Activated T-helper 1 cell treated with anti-CD3 and anti-CD28 coated beads, Interleukin-12 subunit alpha, Interleukin-12 subunit beta, Interleukin-2, Interleukin-4 antibody, amounts not matched to agents 30 ng/mL and 10 ng/mL and 1 ng/mL, durations not matched to agents 14 hours and 24 hours and 36 hours (primary cell): ENCODE measurements at regions of chr1 and their contacts with region 1.

Region 1: GRCh38 chr1:167517535-167518330 is 596 bp downstream of the CD247 start:
- DNase-seq: peak; percentile 76
- H3K4me3 Mint-ChIP-seq: peak overlapping the region; percentile 97
- H3K27ac Mint-ChIP-seq: peak overlapping the region; percentile 98
- H3K4me1 Mint-ChIP-seq: peaks cover 59% of the 10 kb centered on the region
- H3K27me3 Mint-ChIP-seq: peaks cover 7% of the 10 kb centered on the region

Region 2: DNA sequence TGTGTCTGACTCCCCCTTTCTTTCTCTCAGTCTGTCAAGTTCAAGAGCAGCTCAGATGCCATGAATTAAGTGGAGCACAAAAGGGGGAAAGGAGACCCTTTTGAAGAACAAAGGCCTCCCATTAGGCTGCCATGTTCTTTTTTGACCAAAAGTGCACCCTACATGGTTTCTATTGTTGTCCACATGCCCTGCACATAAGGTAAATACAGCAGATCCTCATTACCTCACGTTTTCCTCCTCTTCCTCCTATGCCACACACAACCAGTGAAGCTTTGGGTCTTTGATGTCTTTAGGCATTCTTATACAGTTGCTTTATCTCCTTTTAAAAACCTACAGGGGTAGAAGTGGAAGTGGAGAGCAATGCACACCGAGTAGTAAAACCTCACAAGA is 249.3 kb before region 1 on chr1:
- intact Hi-C with region 1: loop called (anchors 1 kb)
- DNase-seq: no peak
- H3K4me3 Mint-ChIP-seq: no peak overlapping the region
- H3K27ac Mint-ChIP-seq: no peak overlapping the region
- H3K4me1 Mint-ChIP-seq: peaks cover 20% of the 10 kb centered on the region
- H3K27me3 Mint-ChIP-seq: no peaks in the 10 kb centered on the region

Region 3: GRCh38 chr1:167455786-167456446 is 61.8 kb before region 1 on chr1:
- intact Hi-C with region 1: loop called (anchors 1 kb)
- DNase-seq: peak; percentile 36
- H3K4me3 Mint-ChIP-seq: peak overlapping the region; percentile 81
- H3K27ac Mint-ChIP-seq: peak overlapping the region; percentile 86
- H3K4me1 Mint-ChIP-seq: peaks cover 56% of the 10 kb centered on the region
- H3K27me3 Mint-ChIP-seq: no peaks in the 10 kb centered on the region

Region 4: GRCh38 chr1:167491586-167492461 is 25.9 kb before region 1 on chr1:
- intact Hi-C with region 1: loop called (anchors 1 kb)
- DNase-seq: no peak
- H3K4me3 Mint-ChIP-seq: peak overlapping the region; percentile 70
- H3K27ac Mint-ChIP-seq: peak overlapping the region; percentile 88
- H3K4me1 Mint-ChIP-seq: peaks cover 92% of the 10 kb centered on the region
- H3K27me3 Mint-ChIP-seq: no peaks in the 10 kb centered on the region

Region 5: GRCh38 chr1:167533851-167534300 is 16.1 kb after region 1 on chr1:
- intact Hi-C with region 1: loop called (anchors 1 kb)
- DNase-seq: peak; percentile 51
- H3K4me3 Mint-ChIP-seq: no peak overlapping the region
- H3K27ac Mint-ChIP-seq: no peak overlapping the region
- H3K4me1 Mint-ChIP-seq: peaks cover 5% of the 10 kb centered on the region
- H3K27me3 Mint-ChIP-seq: peaks cover 7% of the 10 kb centered on the region